Lower lobe of right lung (tissue), 2 donors: ENCODE measurements at regions of chr1 and their contacts with region 1.

Region 1: GRCh38 chr1:160951443-160952128 is 3.0 kb downstream of the ITLN2 start:
- DNase-seq: peak; percentile 74
- ATAC-seq: peak; percentile 89 to 90
- H3K4me3 ChIP-seq: peak overlapping the region; percentile 30
- H3K27ac ChIP-seq: no peak overlapping the region
- H3K4me1 ChIP-seq: no peaks in the 10 kb centered on the region
- H3K27me3 ChIP-seq: no peaks in the 10 kb centered on the region
- CTCF ChIP-seq: peak; percentile 71

Region 2: DNA sequence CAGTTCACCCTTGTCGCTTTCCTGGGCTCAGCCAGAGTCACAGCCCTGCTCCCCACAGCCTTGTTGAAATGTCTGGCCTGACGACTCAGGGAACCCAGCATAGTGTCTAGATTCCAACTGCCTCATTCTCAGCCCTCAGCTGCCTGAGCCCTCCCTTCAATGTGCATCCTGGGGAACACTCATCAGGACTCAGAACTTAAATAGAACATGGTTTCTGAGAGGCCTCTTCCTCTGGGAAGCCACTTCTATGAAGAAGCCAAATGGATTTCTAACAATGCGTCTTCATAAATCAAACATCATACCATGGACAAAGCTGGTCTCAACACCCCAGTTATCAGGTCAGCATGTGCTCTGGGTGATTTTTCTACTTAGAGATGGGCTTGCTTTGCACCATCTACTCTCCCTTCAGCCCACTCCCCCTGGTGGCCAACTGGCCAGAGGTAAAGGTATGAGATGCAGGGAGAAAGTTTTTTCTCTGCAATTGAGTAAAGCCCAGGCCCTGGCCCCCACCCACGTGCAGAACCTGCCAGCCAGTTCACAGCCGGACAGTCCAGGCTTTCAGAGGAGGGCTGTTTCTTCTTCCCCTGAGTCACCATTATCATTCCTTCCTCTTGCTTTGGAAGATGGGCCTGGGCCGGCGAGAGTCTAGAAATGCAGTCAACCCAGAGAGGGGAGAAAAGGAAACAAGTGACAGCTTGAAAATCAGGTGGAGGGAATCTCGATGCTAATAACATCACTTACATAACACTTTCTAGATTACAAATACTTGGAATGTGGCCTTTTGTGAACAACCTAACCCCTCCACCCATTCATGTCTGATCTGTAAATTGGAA is 121.0 kb before region 1 on chr1:
- intact Hi-C with region 1: loop called (anchors 10 kb)
- DNase-seq: peak; percentile 80
- ATAC-seq: peak; percentile 71 to 74
- H3K4me3 ChIP-seq: no peak overlapping the region
- H3K27ac ChIP-seq: no peak overlapping the region
- H3K4me1 ChIP-seq: no peaks in the 10 kb centered on the region
- H3K27me3 ChIP-seq: no peaks in the 10 kb centered on the region
- CTCF ChIP-seq: peak; percentile 61